ENCODE measurements at regions of chr2 and their contacts with region 1.

Region 1: DNA sequence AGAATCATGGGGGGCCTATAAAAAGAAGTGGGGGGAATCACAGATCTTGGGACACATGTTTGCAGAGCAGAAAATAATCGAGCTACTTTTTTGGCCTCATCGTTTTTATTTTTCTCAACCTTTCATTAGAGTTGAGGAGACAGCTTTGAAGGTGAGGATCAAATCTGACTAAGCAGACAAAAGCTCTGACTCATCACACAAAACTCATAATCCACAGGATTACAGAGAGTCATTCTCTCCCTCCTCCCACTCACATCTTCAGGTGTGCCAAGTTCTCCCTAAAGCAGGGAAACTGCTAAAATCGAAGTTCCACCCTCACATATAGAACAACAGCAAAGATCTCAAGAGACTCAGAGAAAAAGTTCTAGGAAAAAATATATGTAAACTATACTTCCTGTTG is 15.6 kb downstream of the BAZ2B start:
- DNase-seq: no peak
- ATAC-seq: no peak
- H3K4me3 ChIP-seq: no peak overlapping the region
- H3K27ac ChIP-seq: no peak overlapping the region
- H3K4me1 ChIP-seq: peaks cover 0 to 28% (median 10%) of the 10 kb centered on the region in 12 donors
- H3K27me3 ChIP-seq: no peaks in the 10 kb centered on the region
- CTCF ChIP-seq: no peak
- POLR2A ChIP-seq: no peak

Region 2: GRCh38 chr2:159146996-159147666 is 453.6 kb before region 1 on chr2:
- intact Hi-C with region 1: no loop called
- DNase-seq: peak; percentile 62 to 75 (median 66)
- ATAC-seq: peak; percentile 83 to 92 (median 88)
- H3K4me3 ChIP-seq: peak overlapping the region in 1 of 12 donors; percentile 10
- H3K27ac ChIP-seq: peak overlapping the region; percentile 11 to 83 (median 73)
- H3K4me1 ChIP-seq: peaks cover 5 to 73% (median 45%) of the 10 kb centered on the region in 12 donors
- H3K27me3 ChIP-seq: no peaks in the 10 kb centered on the region
- CTCF ChIP-seq: no peak
- POLR2A ChIP-seq: no peak

Region 3: DNA sequence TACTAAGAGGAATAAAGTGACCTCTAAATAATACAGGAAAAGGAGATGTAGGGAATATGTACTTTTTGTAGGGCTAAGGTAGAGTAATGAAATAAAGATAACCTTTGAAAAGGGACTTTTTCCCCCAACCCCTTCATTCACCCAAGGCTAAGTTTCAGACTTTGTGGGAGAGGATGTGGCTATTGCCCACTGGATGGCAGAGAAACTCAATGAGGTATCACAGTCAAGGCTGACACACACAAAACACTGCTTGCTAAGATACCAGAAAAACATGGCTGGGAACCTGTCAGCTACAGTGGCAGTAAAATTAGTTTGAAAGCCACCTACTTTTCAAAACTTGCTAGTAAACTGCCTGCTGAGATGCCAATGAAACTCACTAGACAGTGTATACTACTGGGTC is 155.4 kb before region 1 on chr2:
- intact Hi-C with region 1: loop called in 1 of 10 experiments (anchors 10 kb)
- DNase-seq: no peak
- ATAC-seq: no peak
- H3K4me3 ChIP-seq: no peak overlapping the region
- H3K27ac ChIP-seq: no peak overlapping the region
- H3K4me1 ChIP-seq: peaks cover 0 to 14% (median 3%) of the 10 kb centered on the region in 12 donors
- H3K27me3 ChIP-seq: no peaks in the 10 kb centered on the region
- CTCF ChIP-seq: no peak
- POLR2A ChIP-seq: no peak

Region 4: GRCh38 chr2:159615140-159615951 is 14.6 kb after region 1 on chr2:
- intact Hi-C with region 1: no loop called
- DNase-seq: peak; percentile 93 to 94 (median 94)
- ATAC-seq: peak; percentile 89 to 98 (median 97)
- H3K4me3 ChIP-seq: peak overlapping the region; percentile 61 to 94 (median 74)
- H3K27ac ChIP-seq: peak overlapping the region; percentile 94 to 99 (median 98)
- H3K4me1 ChIP-seq: peaks cover 3 to 52% (median 32%) of the 10 kb centered on the region in 12 donors
- H3K27me3 ChIP-seq: no peaks in the 10 kb centered on the region
- CTCF ChIP-seq: no peak
- POLR2A ChIP-seq: peak in 1 of 2 donors; percentile 62

Measured in heart left ventricle (tissue), 16 donors.